Ascending aorta (tissue), 2 donors: ENCODE measurements at regions of chr1 and their contacts with region 1.

Region 1: GRCh38 chr1:153727463-153728304 is at the start of gene INTS3:
- DNase-seq: peak; percentile 99 to 100
- H3K4me3 ChIP-seq: peak within 1 kb of the TSS; percentile 68 to 83
- H3K27ac ChIP-seq: peak within 1 kb of the TSS; percentile 97 to 98
- H3K4me1 ChIP-seq: peaks cover 0 to 33% of the 10 kb centered on the region in 2 donors
- H3K27me3 ChIP-seq: no peaks in the 10 kb centered on the region
- CTCF ChIP-seq: no peak
- total RNA-seq, gene INTS3: 55.9 TPM

Region 2: GRCh38 chr1:153548722-153549695 is 178.7 kb before region 1 on chr1 and contains the start of gene S100A3:
- intact Hi-C with region 1: no loop called
- DNase-seq: peak in 1 of 2 donors; percentile 95
- H3K4me3 ChIP-seq: no peak within 1 kb of the TSS
- H3K27ac ChIP-seq: peak within 1 kb of the TSS; percentile 74 to 92
- H3K4me1 ChIP-seq: peaks cover 48 to 76% of the 10 kb centered on the region in 2 donors
- H3K27me3 ChIP-seq: no peaks in the 10 kb centered on the region
- CTCF ChIP-seq: peak in 2 of 3 experiments; percentile 42 to 44
- total RNA-seq, gene S100A3: not detected

Region 3: GRCh38 chr1:153698020-153698931 is 29.4 kb before region 1 on chr1:
- intact Hi-C with region 1: loop called (anchors 1 kb)
- DNase-seq: peak; percentile 54 to 93
- H3K4me3 ChIP-seq: peak overlapping the region; percentile 33 to 38
- H3K27ac ChIP-seq: peak overlapping the region; percentile 99 to 100
- H3K4me1 ChIP-seq: peaks cover 16 to 33% of the 10 kb centered on the region in 2 donors
- H3K27me3 ChIP-seq: no peaks in the 10 kb centered on the region
- CTCF ChIP-seq: no peak

Region 4: DNA sequence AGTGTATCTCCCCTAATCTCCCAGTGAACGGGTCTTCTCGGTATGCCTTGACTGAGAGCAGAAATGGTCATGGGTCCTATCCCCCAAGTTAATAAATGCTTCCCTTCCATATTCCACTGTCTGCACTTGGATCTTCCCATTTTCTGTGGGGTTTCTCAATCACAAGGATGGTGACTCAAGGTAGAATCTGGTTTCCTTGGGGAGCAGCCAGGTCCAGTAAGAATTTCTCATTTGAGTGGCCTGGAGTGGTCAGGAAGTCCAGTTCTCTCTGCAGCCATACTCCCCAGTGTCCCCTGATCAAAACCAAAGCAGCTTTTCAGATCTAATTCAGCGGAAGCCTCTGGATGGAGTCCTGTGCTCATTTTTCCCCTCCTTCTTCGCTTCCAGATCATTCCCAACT is 32.8 kb after region 1 on chr1:
- intact Hi-C with region 1: no loop called
- DNase-seq: no peak
- H3K4me3 ChIP-seq: no peak overlapping the region
- H3K27ac ChIP-seq: no peak overlapping the region
- H3K4me1 ChIP-seq: no peaks in the 10 kb centered on the region
- H3K27me3 ChIP-seq: no peaks in the 10 kb centered on the region
- CTCF ChIP-seq: no peak

Region 5: GRCh38 chr1:155485945-155486344 is 1758.3 kb after region 1 on chr1:
- intact Hi-C with region 1: no loop called
- DNase-seq: no peak
- H3K4me3 ChIP-seq: no peak overlapping the region
- H3K27ac ChIP-seq: no peak overlapping the region
- H3K4me1 ChIP-seq: no peaks in the 10 kb centered on the region
- H3K27me3 ChIP-seq: no peaks in the 10 kb centered on the region
- CTCF ChIP-seq: no peak